ENCODE measurements at regions of chr17 and their contacts with region 1.

Region 1: GRCh38 chr17:8435245-8436168 is at the start of gene NDEL1:
- DNase-seq: peak; percentile 98
- H3K4me3 ChIP-seq: peak within 1 kb of the TSS; percentile 77 to 97 (median 93)
- H3K27ac ChIP-seq: peak within 1 kb of the TSS; percentile 86
- H3K4me1 ChIP-seq: peaks cover 12% of the 10 kb centered on the region
- H3K27me3 ChIP-seq: no peaks in the 10 kb centered on the region
- CTCF ChIP-seq: no peak
- POLR2A ChIP-seq: peak; percentile 95
- total RNA-seq, gene NDEL1: 60.0 and 65.7 TPM in 2 replicates

Region 2: GRCh38 chr17:8447799-8448198 is 12.3 kb after region 1 on chr17:
- CTCF ChIA-PET with region 1: interaction called, 4 read pairs
- POLR2A ChIA-PET with region 1: interaction called, 6 read pairs
- dilution Hi-C with region 1: no loop called
- intact Hi-C with region 1: loop called (anchors 1 kb)
- DNase-seq: no peak
- H3K4me3 ChIP-seq: no peak overlapping the region
- H3K27ac ChIP-seq: no peak overlapping the region
- H3K4me1 ChIP-seq: peaks cover 37% of the 10 kb centered on the region
- H3K27me3 ChIP-seq: no peaks in the 10 kb centered on the region
- CTCF ChIP-seq: no peak
- POLR2A ChIP-seq: no peak

Region 3: DNA sequence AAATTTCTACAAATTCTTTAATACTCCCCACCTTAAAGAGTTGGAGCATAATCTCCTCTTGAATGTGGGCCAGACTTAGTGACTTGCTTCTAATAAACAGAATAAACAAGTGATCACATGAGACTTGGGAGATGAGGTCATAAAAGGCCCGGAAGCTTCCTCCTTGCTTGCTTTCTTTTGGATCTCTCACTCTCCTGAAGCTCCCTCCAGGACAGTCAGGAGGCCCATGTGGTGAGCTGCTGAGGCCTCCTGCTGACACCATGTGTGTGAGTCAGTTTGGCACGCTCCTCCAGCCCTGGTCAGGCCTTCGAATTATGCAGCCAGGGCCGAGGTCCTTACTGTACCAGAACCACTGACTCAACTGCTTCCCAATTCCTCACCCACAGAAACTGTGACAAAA is 53.4 kb after region 1 on chr17:
- CTCF ChIA-PET with region 1: no interaction called
- POLR2A ChIA-PET with region 1: interaction called, 10 read pairs
- dilution Hi-C with region 1: no loop called
- intact Hi-C with region 1: no loop called
- DNase-seq: peak; percentile 38
- H3K4me3 ChIP-seq: no peak overlapping the region
- H3K27ac ChIP-seq: no peak overlapping the region
- H3K4me1 ChIP-seq: no peaks in the 10 kb centered on the region
- H3K27me3 ChIP-seq: no peaks in the 10 kb centered on the region
- CTCF ChIP-seq: no peak
- POLR2A ChIP-seq: no peak

Region 4: GRCh38 chr17:8630802-8631553 is 195.5 kb after region 1 on chr17:
- CTCF ChIA-PET with region 1: interaction called, 3 read pairs
- POLR2A ChIA-PET with region 1: no interaction called
- dilution Hi-C with region 1: no loop called
- intact Hi-C with region 1: loop called (anchors 10 kb)
- DNase-seq: peak; percentile 100
- H3K4me3 ChIP-seq: peak overlapping the region; percentile 68 to 99 (median 98)
- H3K27ac ChIP-seq: peak overlapping the region; percentile 35
- H3K4me1 ChIP-seq: peaks cover 15% of the 10 kb centered on the region
- H3K27me3 ChIP-seq: peaks cover 0 to 5% of the 10 kb centered on the region in 2 experiments
- CTCF ChIP-seq: no peak
- POLR2A ChIP-seq: no peak